AG04450 (cell line): ENCODE measurements at regions of chr5 and their contacts with region 1.

Region 1: DNA sequence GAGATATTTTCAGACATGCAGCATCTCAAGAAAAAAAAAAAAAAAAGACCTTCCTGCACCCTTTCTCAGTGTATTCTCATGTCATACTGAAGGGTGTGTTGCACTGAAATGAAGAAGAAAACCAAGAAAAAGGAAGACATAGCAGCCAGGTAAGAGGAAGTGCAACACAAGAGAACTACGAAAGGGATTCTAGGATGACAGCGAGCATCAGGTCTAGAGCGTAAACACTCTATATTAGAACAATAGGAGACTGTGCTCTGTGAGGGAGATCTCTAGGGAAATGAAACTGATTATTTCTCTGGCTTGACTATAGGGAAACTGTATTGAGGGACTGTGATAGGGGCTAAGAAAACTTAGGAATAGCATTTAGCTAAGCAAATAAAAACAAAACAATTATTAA is 30.0 kb downstream of the BTF3 start:
- DNase-seq: no peak
- H3K4me3 ChIP-seq: no peak overlapping the region
- H3K27ac ChIP-seq: no peak overlapping the region
- H3K27me3 ChIP-seq: no peaks in the 10 kb centered on the region
- CTCF ChIP-seq: no peak

Region 2: DNA sequence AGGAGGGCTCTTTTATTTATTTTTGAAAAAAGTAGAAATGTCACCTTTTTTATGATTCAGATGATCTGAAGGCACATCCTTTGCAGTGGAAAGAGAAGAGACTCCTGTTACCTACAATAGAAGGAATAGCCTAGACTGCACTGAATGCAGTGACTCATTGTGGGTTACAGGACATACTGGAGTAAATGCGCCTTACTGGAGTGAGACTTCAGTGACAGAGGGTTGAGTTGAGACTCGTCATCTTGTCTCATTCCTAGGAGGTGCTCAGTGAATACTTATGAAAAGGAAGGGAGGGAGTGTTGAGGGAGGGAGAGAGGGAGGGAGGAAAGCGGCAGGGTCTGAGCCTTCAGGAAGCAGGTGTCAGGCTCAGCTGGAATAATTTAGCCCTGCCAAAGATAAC is 11.9 kb after region 1 on chr5:
- CTCF ChIA-PET with region 1: interaction called, 110 read pairs
- POLR2A ChIA-PET with region 1: interaction called, 3 read pairs
- DNase-seq: no peak
- H3K4me3 ChIP-seq: no peak overlapping the region
- H3K27ac ChIP-seq: no peak overlapping the region
- H3K27me3 ChIP-seq: no peaks in the 10 kb centered on the region
- CTCF ChIP-seq: no peak